Right ventricle myocardium inferior (tissue), 1 donor: ENCODE measurements at regions of chr12 and their contacts with region 1.

Region 1: GRCh38 chr12:45388545-45388944 is 172.7 kb downstream of the ANO6 start:
- DNase-seq: no peak
- ATAC-seq: no peak

Region 2: DNA sequence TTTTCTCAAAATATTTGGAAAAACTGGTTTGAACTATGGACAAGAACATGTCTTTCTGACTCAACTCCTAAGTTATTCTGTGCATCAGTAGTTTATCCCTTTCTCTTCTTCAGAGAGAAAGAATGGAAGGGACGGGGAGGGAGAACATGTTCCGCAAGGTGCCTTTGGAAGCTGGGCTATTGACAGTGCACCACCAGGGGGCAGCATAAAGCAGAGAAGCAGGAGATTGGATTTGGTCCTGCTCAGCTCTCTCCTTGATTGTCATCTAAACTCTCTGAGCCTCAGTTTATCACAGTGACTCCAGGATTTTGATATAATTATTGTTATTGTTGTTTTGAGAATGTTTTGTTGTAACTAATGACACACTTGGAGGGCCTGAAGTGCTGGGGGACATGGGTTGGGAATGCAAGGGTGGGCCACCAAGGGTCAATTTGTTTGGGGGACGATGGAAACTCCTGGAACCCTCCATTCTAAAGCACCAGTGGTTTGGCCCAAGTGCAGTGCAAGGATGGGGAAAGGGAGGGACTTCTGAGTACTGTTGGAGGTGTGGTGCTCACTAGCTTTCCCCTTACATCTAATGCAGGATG is 218.0 kb before region 1 on chr12:
- intact Hi-C with region 1: loop called (anchors 5 kb)
- DNase-seq: peak; percentile 70
- ATAC-seq: peak; percentile 69

Region 3: GRCh38 chr12:45464699-45465098 is 76.2 kb after region 1 on chr12:
- intact Hi-C with region 1: no loop called
- DNase-seq: no peak
- ATAC-seq: no peak